GM18951 (cell line): ENCODE measurements at regions of chr16 and their contacts with region 1.

Region 1: GRCh38 chr16:66590322-66590721 is 11.1 kb downstream of the CMTM2 start:
- POLR2A ChIP-seq: no peak

Region 2: GRCh38 chr16:66416939-66417700 is 173.2 kb before region 1 on chr16:
- in situ Hi-C with region 1: loop called (anchors 10 kb)
- POLR2A ChIP-seq: no peak